ENCODE measurements at regions of chr3 and their contacts with region 1.

Region 1: GRCh38 chr3:128933213-128933921 is 53.9 kb downstream of the ACAD9 start:
- DNase-seq: no peak
- CTCF ChIP-seq: no peak

Region 2: GRCh38 chr3:128702391-128702790 is 231.0 kb before region 1 on chr3:
- CTCF ChIA-PET with region 1: no interaction called
- POLR2A ChIA-PET with region 1: no interaction called
- DNase-seq: no peak
- CTCF ChIP-seq: no peak

Region 3: GRCh38 chr3:128950223-128950938 is 17.0 kb after region 1 on chr3:
- CTCF ChIA-PET with region 1: interaction called, 3 read pairs
- POLR2A ChIA-PET with region 1: interaction called, 10 read pairs
- DNase-seq: no peak
- CTCF ChIP-seq: peak; percentile 40

Region 4: GRCh38 chr3:128984596-128984995 is 51.2 kb after region 1 on chr3:
- CTCF ChIA-PET with region 1: no interaction called
- POLR2A ChIA-PET with region 1: no interaction called
- DNase-seq: no peak
- CTCF ChIP-seq: no peak

Region 5: GRCh38 chr3:129095285-129095684 is 161.9 kb after region 1 on chr3:
- CTCF ChIA-PET with region 1: no interaction called
- POLR2A ChIA-PET with region 1: no interaction called
- DNase-seq: no peak
- CTCF ChIP-seq: no peak